PC-9 (cell line): ENCODE measurements at regions of chr10 and their contacts with region 1.

Region 1: GRCh38 chr10:122388287-122388997 is 13.9 kb downstream of the PLEKHA1 start:
- DNase-seq: no peak
- H3K4me3 ChIP-seq: no peak overlapping the region
- H3K27ac ChIP-seq: no peak overlapping the region
- H3K4me1 ChIP-seq: no peaks in the 10 kb centered on the region
- H3K27me3 ChIP-seq: no peaks in the 10 kb centered on the region
- CTCF ChIP-seq: no peak

Region 2: DNA sequence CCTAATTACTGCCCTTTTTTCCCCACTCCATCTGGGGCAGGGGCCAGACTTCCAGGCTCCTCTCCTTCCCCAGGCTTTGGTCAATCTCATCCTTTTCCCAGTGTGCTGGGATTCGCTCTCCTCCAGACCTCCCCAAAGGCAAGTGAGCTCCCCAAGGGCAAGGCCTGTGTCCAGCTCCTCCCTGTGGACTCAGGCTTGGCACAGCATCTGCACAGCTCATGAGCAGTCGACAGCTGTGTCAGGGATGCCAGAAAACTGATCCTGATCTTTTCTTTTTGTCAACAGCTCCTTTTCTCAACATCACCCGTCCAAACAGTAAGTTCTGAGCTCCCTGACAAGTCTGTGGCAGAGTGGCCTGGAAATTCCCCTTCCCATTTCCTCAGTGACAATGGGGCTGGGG is 244.1 kb after region 1 on chr10:
- CTCF ChIA-PET with region 1: interaction called, 12 read pairs
- POLR2A ChIA-PET with region 1: no interaction called
- intact Hi-C with region 1: no loop called
- DNase-seq: no peak
- H3K4me3 ChIP-seq: no peak overlapping the region
- H3K27ac ChIP-seq: no peak overlapping the region
- H3K4me1 ChIP-seq: no peaks in the 10 kb centered on the region
- H3K27me3 ChIP-seq: no peaks in the 10 kb centered on the region
- CTCF ChIP-seq: no peak